Testis (tissue), 5 donors: ENCODE measurements at regions of chr18 and their contacts with region 1.

Region 1: GRCh38 chr18:32552421-32553030 is 81.8 kb upstream of the GAREM1 start:
- DNase-seq: peak; percentile 83
- H3K4me3 ChIP-seq: no peak overlapping the region
- H3K27ac ChIP-seq: no peak overlapping the region
- H3K4me1 ChIP-seq: peaks cover 10% of the 10 kb centered on the region
- H3K27me3 ChIP-seq: no peaks in the 10 kb centered on the region
- CTCF ChIP-seq: peak; percentile 46 to 71 (median 70)
- POLR2A ChIP-seq: no peak

Region 2: GRCh38 chr18:32158108-32158624 is 394.4 kb before region 1 on chr18:
- intact Hi-C with region 1: loop called (anchors 5 kb)
- DNase-seq: peak; percentile 90
- H3K4me3 ChIP-seq: peak overlapping the region in 1 of 2 donors; percentile 7
- H3K27ac ChIP-seq: no peak overlapping the region
- H3K4me1 ChIP-seq: no peaks in the 10 kb centered on the region
- H3K27me3 ChIP-seq: no peaks in the 10 kb centered on the region
- CTCF ChIP-seq: peak; percentile 79 to 89 (median 83)
- POLR2A ChIP-seq: no peak

Region 3: GRCh38 chr18:32753656-32754260 is 201.2 kb after region 1 on chr18:
- intact Hi-C with region 1: no loop called
- DNase-seq: no peak
- H3K4me3 ChIP-seq: no peak overlapping the region
- H3K27ac ChIP-seq: no peak overlapping the region
- H3K4me1 ChIP-seq: no peaks in the 10 kb centered on the region
- H3K27me3 ChIP-seq: no peaks in the 10 kb centered on the region
- CTCF ChIP-seq: no peak
- POLR2A ChIP-seq: no peak